Activated naive CD4-positive, alpha-beta T cell treated with anti-CD3 and anti-CD28 coated beads for 36 hours (primary cell): ENCODE measurements at regions of chr4 and their contacts with region 1.

Region 1: GRCh38 chr4:145097821-145098674 is at the starts of genes ABCE1 and ANAPC10:
- DNase-seq: peak; percentile 97
- H3K4me3 Mint-ChIP-seq: peak within 1 kb of the TSS; percentile 92
- H3K27ac Mint-ChIP-seq: peak within 1 kb of the TSS; percentile 97
- H3K4me1 Mint-ChIP-seq: peaks cover 23% of the 10 kb centered on the region
- H3K27me3 Mint-ChIP-seq: no peaks in the 10 kb centered on the region
- total RNA-seq, gene ABCE1: 164 to 174 TPM
- total RNA-seq, gene ANAPC10: 23.5 to 26.5 TPM

Region 2: GRCh38 chr4:143513306-143514168 is 1584.5 kb before region 1 on chr4 and contains the start of gene SMARCA5:
- CTCF ChIA-PET with region 1: no interaction called
- intact Hi-C with region 1: loop called (anchors 1 kb)
- DNase-seq: peak; percentile 96
- H3K4me3 Mint-ChIP-seq: peak within 1 kb of the TSS; percentile 96
- H3K27ac Mint-ChIP-seq: peak within 1 kb of the TSS; percentile 97
- H3K4me1 Mint-ChIP-seq: peaks cover 30% of the 10 kb centered on the region
- H3K27me3 Mint-ChIP-seq: no peaks in the 10 kb centered on the region
- total RNA-seq, gene SMARCA5: 62.4 to 63.5 TPM

Region 3: GRCh38 chr4:144645631-144646522 is 452.2 kb before region 1 on chr4 and contains the start of gene HHIP:
- CTCF ChIA-PET with region 1: no interaction called
- intact Hi-C with region 1: loop called (anchors 2 kb)
- DNase-seq: peak; percentile 25
- H3K4me3 Mint-ChIP-seq: peak within 1 kb of the TSS; percentile 77
- H3K27ac Mint-ChIP-seq: no peak within 1 kb of the TSS
- H3K4me1 Mint-ChIP-seq: peaks cover 15% of the 10 kb centered on the region
- H3K27me3 Mint-ChIP-seq: peaks cover 46% of the 10 kb centered on the region
- total RNA-seq, gene HHIP: not detected

Region 4: GRCh38 chr4:145299380-145300076 is 201.5 kb after region 1 on chr4:
- CTCF ChIA-PET with region 1: no interaction called
- intact Hi-C with region 1: loop called (anchors 2 kb)
- DNase-seq: peak; percentile 88
- H3K4me3 Mint-ChIP-seq: no peak overlapping the region
- H3K27ac Mint-ChIP-seq: no peak overlapping the region
- H3K4me1 Mint-ChIP-seq: peaks cover 23% of the 10 kb centered on the region
- H3K27me3 Mint-ChIP-seq: peaks cover 9% of the 10 kb centered on the region

Region 5: GRCh38 chr4:145481164-145481941 is 383.3 kb after region 1 on chr4 and contains the start of gene SMAD1:
- CTCF ChIA-PET with region 1: no interaction called
- intact Hi-C with region 1: loop called (anchors 5 kb)
- DNase-seq: peak; percentile 29
- H3K4me3 Mint-ChIP-seq: peak within 1 kb of the TSS; percentile 73
- H3K27ac Mint-ChIP-seq: no peak within 1 kb of the TSS
- H3K4me1 Mint-ChIP-seq: peaks cover 5% of the 10 kb centered on the region
- H3K27me3 Mint-ChIP-seq: peaks cover 31% of the 10 kb centered on the region
- total RNA-seq, gene SMAD1: 0.57 to 0.79 TPM

Region 6: DNA sequence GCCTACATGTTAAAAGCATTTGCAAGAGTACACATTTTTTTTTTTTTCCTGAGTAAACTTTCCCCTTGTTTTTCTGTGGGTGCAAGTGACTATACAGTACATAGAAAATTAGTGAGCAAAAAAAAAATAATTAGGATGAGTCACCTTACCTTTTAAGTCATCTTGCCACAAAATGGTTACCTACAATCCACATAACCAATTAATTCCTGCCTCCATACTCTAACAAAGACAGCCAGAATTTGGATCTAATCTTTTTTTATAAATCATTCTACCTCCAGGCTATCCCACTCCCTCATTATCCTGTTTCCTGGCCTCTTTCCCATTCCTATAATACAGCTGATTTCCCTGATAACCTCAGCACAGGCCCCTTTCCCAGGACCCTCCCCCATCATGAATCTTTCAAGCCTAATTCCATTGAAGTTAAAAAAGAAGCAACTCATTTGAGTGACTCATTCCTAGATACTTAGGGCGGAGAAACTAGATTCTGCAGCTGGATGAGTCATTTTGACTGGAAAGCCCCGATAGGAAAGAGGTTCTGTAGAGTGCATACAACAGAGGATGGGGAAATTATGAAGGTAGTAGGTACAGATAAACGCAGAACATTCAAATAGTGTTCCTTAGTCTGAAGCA is 710.1 kb after region 1 on chr4:
- CTCF ChIA-PET with region 1: no interaction called
- intact Hi-C with region 1: loop called (anchors 1 kb)
- DNase-seq: peak; percentile 74
- H3K4me3 Mint-ChIP-seq: peak overlapping the region; percentile 46
- H3K27ac Mint-ChIP-seq: peak overlapping the region; percentile 91
- H3K4me1 Mint-ChIP-seq: peaks cover 44% of the 10 kb centered on the region
- H3K27me3 Mint-ChIP-seq: no peaks in the 10 kb centered on the region